Calu3 (cell line): ENCODE measurements at regions of chr1 and their contacts with region 1.

Region 1: GRCh38 chr1:89598450-89599331 is 34.2 kb upstream of the LRRC8C start:
- DNase-seq: peak; percentile 36
- H3K4me3 Mint-ChIP-seq: no peak overlapping the region
- H3K27ac Mint-ChIP-seq: peak overlapping the region; percentile 56
- H3K4me1 Mint-ChIP-seq: peaks cover 14% of the 10 kb centered on the region
- H3K27me3 Mint-ChIP-seq: no peaks in the 10 kb centered on the region
- CTCF ChIP-seq: peak; percentile 60

Region 2: DNA sequence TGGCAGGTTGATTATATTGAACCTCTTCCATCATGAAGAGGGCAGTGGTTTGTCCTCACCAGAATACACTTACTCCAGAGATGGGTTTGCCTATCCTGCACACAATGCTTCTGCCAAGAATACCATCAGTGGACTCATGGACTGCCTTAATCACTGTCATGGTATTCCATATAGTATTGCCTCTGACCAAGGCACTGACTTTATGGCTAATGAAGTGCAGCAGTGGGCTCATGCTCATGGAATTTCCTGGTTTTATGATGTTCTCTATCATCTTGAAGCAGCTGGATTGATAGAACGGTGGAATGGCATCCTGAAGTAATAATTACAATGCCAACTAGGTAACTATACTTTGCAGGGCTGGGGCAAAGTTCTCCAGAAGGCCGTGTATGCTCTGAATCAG is 251.4 kb before region 1 on chr1:
- CTCF ChIA-PET with region 1: no interaction called
- intact Hi-C with region 1: no loop called
- DNase-seq: no peak
- H3K4me3 Mint-ChIP-seq: no peak overlapping the region
- H3K27ac Mint-ChIP-seq: no peak overlapping the region
- H3K4me1 Mint-ChIP-seq: no peaks in the 10 kb centered on the region
- H3K27me3 Mint-ChIP-seq: no peaks in the 10 kb centered on the region
- CTCF ChIP-seq: no peak

Region 3: DNA sequence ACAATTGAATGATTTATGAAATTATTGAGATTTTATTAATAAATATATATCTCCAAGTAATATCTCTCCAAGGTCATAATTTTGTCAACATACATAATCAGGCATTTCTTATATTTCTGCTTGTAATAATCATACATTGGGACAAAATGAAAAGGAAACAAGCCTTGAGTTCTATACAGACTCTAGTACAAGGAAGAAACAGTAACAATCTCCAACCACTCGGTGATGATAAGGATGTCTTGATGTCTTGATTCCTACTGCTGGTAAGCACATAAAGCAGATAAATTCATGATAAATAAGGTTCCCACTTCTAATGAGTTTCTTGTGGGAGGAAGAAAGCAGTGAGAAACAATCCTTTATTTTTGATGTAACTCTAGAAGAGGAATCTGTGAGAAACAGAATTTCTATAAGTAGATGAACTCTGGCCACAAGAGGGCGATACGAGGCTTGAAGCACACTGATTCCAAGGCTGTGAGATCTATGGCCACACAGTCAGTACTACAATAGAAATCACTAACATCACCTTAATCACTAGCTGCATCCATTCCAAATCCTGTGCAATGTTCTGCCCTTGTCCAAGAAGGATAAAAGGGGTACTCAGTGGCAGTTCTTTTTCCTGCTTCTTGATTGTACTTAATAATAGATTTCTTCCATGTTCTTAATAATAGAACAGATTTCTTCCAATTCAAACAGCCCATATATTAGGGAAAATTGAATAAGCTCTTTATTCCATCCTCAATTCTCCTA is 115.5 kb before region 1 on chr1:
- CTCF ChIA-PET with region 1: interaction called, 5 read pairs
- intact Hi-C with region 1: loop called (anchors 1 kb)
- DNase-seq: peak; percentile 71
- H3K4me3 Mint-ChIP-seq: no peak overlapping the region
- H3K27ac Mint-ChIP-seq: no peak overlapping the region
- H3K4me1 Mint-ChIP-seq: no peaks in the 10 kb centered on the region
- H3K27me3 Mint-ChIP-seq: no peaks in the 10 kb centered on the region
- CTCF ChIP-seq: no peak

Region 4: DNA sequence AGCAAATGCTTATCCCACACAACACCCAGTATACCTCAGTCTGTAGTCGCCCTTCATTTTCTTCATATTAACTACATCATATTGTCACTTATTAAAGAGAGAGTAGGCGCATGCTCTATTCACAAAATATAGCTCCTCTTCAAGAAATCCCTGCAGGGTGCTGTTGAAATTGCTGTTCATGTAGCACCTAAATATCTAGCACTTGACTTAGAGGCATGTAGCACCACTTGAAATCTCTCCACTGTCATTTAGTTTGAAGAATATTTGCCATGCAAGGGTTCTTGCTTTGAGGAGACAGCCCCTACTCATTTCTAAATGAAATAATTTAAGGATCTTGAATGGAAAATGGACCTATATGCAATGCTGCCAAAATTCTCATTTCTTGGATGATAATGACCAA is 95.0 kb before region 1 on chr1:
- CTCF ChIA-PET with region 1: no interaction called
- intact Hi-C with region 1: no loop called
- DNase-seq: no peak
- H3K4me3 Mint-ChIP-seq: no peak overlapping the region
- H3K27ac Mint-ChIP-seq: no peak overlapping the region
- H3K4me1 Mint-ChIP-seq: no peaks in the 10 kb centered on the region
- H3K27me3 Mint-ChIP-seq: no peaks in the 10 kb centered on the region
- CTCF ChIP-seq: no peak

Region 5: DNA sequence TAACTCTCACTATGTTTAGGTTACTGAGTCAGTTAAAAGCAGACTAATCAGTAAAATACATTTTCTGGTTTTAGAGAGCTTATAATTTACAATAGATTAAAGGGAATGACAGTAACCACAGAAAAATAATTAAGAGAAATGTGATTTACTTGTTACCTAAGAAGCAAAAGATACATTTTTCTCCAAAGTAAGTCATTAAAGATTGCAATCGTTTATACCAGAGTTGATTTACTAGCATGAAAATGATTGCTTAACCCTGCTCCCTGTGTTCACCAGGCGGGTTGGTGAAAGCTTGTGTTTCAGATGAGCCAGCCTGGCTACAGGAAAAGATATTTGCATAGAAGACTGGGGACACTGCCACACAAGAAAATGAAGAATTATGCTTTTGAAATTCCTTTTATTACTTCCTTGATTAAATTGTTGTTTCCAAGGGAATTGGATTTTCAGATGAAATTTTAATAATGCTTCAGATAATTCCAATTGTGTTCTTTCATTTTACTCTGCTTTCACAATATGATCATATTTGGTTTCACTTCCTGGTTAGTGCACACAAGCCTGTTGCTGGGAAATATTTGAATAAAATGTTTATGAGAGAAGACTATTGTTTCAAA is 46.1 kb before region 1 on chr1:
- CTCF ChIA-PET with region 1: no interaction called
- intact Hi-C with region 1: loop called (anchors 5 kb)
- DNase-seq: peak; percentile 40
- H3K4me3 Mint-ChIP-seq: peak overlapping the region; percentile 39
- H3K27ac Mint-ChIP-seq: peak overlapping the region; percentile 62
- H3K4me1 Mint-ChIP-seq: peaks cover 53% of the 10 kb centered on the region
- H3K27me3 Mint-ChIP-seq: no peaks in the 10 kb centered on the region
- CTCF ChIP-seq: no peak